ENCODE measurements at regions of chr1 and their contacts with region 1.

Region 1: GRCh38 chr1:39488793-39489566 is 2.5 kb upstream of the BMP8A start:
- DNase-seq: peak; percentile 16 to 39 (median 36)
- H3K4me3 ChIP-seq: no peak overlapping the region
- H3K4me3 Mint-ChIP-seq: peak overlapping the region in 1 of 2 donors; percentile 77
- H3K27ac ChIP-seq: no peak overlapping the region
- H3K27ac Mint-ChIP-seq: peak overlapping the region in 1 of 7 donors; percentile 75
- H3K4me1 ChIP-seq: peaks cover 15 to 18% of the 10 kb centered on the region in 2 donors
- H3K4me1 Mint-ChIP-seq: peaks cover 20% of the 10 kb centered on the region
- H3K27me3 ChIP-seq: peaks cover 18 to 34% of the 10 kb centered on the region in 2 donors
- H3K27me3 Mint-ChIP-seq: peaks cover 33 to 43% (median 37%) of the 10 kb centered on the region in 3 donors
- CTCF ChIP-seq: no peak

Region 2: DNA sequence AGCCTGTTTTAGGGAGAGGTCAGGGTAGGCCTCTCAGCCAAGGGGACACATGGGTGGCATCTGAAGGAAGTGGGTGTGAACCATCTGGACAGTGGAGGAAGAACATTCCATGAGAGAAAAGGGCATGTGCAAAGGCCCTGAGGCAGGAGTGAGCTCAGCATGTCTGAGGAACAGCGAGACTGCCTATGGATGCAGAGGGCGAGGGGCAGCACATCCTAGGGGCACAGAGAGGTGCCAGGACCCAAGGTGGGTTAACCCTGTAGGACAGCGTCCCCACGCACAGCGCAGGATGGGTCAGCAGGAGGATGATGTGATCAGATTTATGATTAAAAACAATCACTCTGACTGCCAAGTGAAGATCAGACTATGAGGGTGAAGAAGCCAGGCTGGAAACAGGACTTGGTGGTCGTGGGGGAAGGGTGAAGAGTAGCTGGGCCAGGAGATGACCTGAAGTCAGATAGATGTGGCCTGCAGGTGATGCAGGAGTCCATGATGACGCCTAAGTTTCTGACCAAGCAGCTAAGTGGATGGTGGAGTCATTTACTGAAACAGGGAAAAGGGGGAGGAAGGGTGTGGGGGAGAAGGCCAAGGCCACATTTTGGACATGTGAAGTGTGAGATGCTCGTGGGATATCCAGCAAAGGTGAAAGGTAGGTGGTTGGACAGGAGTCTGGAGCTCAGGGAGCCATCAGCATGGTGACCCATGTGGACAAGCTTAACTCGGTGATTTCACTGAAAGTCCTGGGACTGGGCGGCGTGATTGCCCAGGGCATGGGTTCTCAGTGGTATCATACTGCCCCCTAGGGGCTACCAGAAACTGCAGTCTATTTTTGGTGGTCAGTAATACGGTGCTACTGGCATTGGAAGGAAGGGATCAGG is 49.8 kb after region 1 on chr1:
- intact Hi-C with region 1: loop called (anchors 10 kb)
- DNase-seq: peak; percentile 68 to 78 (median 69)
- H3K4me3 ChIP-seq: no peak overlapping the region
- H3K4me3 Mint-ChIP-seq: no peak overlapping the region
- H3K27ac ChIP-seq: no peak overlapping the region
- H3K27ac Mint-ChIP-seq: peak overlapping the region in 6 of 7 donors; percentile 21 to 99 (median 66)
- H3K4me1 ChIP-seq: peaks cover 30 to 32% of the 10 kb centered on the region in 2 donors
- H3K4me1 Mint-ChIP-seq: peaks cover 34% of the 10 kb centered on the region
- H3K27me3 ChIP-seq: no peaks in the 10 kb centered on the region
- H3K27me3 Mint-ChIP-seq: no peaks in the 10 kb centered on the region
- CTCF ChIP-seq: peak; percentile 87

Region 3: GRCh38 chr1:39575191-39576015 is 86.4 kb after region 1 on chr1:
- intact Hi-C with region 1: loop called in 1 of 2 experiments (anchors 10 kb)
- DNase-seq: peak; percentile 15 to 45 (median 41)
- H3K4me3 ChIP-seq: peak overlapping the region; percentile 70 to 86 (median 72)
- H3K4me3 Mint-ChIP-seq: peak overlapping the region; percentile 92 to 93
- H3K27ac ChIP-seq: peak overlapping the region; percentile 14 to 79
- H3K27ac Mint-ChIP-seq: peak overlapping the region; percentile 80 to 92 (median 88)
- H3K4me1 ChIP-seq: peaks cover 24 to 28% of the 10 kb centered on the region in 2 donors
- H3K4me1 Mint-ChIP-seq: peaks cover 27% of the 10 kb centered on the region
- H3K27me3 ChIP-seq: no peaks in the 10 kb centered on the region
- H3K27me3 Mint-ChIP-seq: peaks cover 3 to 4% (median 3%) of the 10 kb centered on the region in 3 donors
- CTCF ChIP-seq: no peak

Measured in CD14-positive monocyte (primary cell).